SK-N-SH (cell line): ENCODE measurements at regions of chr7 and their contacts with region 1.

Region 1: DNA sequence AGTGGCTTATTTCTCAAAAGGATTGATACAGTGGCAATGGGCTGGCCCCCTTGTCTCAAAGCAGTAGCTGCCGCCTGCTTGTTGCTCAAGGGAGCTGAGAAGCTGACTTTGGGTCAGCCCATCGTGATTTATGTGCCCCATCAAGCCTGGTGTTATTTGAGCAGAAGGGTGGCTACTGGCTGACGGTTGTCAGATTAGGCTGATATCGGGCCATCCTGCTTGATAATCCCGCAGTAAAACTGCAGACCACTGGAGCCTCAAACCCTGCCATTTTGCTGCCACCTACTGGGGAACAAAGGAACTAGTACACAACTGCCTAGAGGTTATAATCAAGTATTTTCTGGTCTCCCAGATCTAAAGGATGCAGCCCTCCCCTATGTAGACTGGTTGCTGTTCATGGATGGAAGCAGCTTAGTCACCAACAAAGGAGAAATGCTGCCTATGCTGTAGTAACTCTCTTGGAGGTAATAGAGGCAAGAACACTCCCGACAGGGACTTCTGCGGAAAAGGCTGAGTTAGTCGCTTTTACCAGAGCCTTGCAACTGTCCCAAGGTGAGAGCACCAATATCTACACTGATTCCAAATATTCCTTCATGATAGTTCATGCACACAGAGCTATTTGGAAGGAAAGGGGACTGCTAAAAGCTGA is 65.9 kb upstream of the ZNF92 start:
- DNase-seq: peak; percentile 77
- H3K4me3 ChIP-seq: peak overlapping the region in 1 of 2 experiments; percentile 16; a peak in 2 of 4 replicates
- H3K27ac ChIP-seq: no peak overlapping the region
- H3K4me1 ChIP-seq: peaks cover 0 to 14% of the 10 kb centered on the region in 2 experiments; a peak in 2 of 4 replicates
- H3K27me3 ChIP-seq: no peaks in the 10 kb centered on the region
- CTCF ChIP-seq: peak; percentile 97
- EP300 ChIP-seq: no peak
- RAD21 ChIP-seq: peak; percentile 100

Region 2: GRCh38 chr7:64902806-64903721 is 404.7 kb before region 1 on chr7 and contains the start of gene ZNF273:
- CTCF ChIA-PET with region 1: no interaction called
- POLR2A ChIA-PET with region 1: no interaction called
- DNase-seq: peak; percentile 90
- H3K4me3 ChIP-seq: peak within 1 kb of the TSS; percentile 79 to 92
- H3K27ac ChIP-seq: peak within 1 kb of the TSS; percentile 70 to 75
- H3K4me1 ChIP-seq: peaks cover 0 to 17% of the 10 kb centered on the region in 2 experiments; a peak in 3 of 4 replicates
- H3K27me3 ChIP-seq: no peaks in the 10 kb centered on the region
- CTCF ChIP-seq: no peak
- EP300 ChIP-seq: no peak
- RAD21 ChIP-seq: no peak
- polyA plus RNA-seq, gene ZNF273: 2.3 and 3.0 TPM in 2 replicates

Region 3: GRCh38 chr7:65216459-65216858 is 91.3 kb before region 1 on chr7:
- CTCF ChIA-PET with region 1: interaction called, 181 read pairs
- POLR2A ChIA-PET with region 1: no interaction called
- DNase-seq: peak; percentile 20
- H3K4me3 ChIP-seq: no peak overlapping the region
- H3K27ac ChIP-seq: no peak overlapping the region
- H3K4me1 ChIP-seq: no peaks in the 10 kb centered on the region
- H3K27me3 ChIP-seq: no peaks in the 10 kb centered on the region
- CTCF ChIP-seq: peak; percentile 80
- EP300 ChIP-seq: no peak
- RAD21 ChIP-seq: peak; percentile 90

Region 4: DNA sequence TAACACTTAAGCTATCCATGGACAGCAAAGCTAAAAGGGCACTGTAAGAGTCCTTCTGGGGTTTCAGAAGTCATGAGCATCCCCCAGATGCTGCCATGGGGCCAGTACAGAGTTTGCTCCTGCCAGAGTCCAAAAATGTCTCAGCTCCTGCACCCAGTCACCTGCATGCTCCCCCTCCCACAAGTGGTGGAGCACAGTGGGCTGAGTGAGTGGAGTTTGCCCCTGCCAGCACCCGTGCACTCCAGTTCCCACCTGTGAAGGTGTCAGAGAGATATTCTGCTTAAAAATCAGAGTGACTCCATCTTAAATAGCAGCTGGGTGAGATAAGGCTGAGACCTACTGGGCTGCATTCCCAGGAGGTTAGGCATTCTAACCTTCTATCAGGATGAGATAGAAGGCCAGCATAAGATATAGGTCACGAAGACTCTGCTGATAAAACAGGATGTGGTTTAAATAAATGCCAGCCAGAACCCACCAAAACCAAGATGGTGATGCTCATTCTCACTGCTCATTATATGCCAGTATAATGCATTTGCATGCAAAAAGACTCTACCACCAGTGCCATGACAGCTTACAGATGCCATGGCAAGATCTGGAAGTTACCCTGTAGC is 74.3 kb before region 1 on chr7:
- CTCF ChIA-PET with region 1: interaction called, 32 read pairs
- POLR2A ChIA-PET with region 1: no interaction called
- DNase-seq: no peak
- H3K4me3 ChIP-seq: no peak overlapping the region
- H3K27ac ChIP-seq: no peak overlapping the region
- H3K4me1 ChIP-seq: peaks cover 0 to 14% of the 10 kb centered on the region in 2 experiments; a peak in 2 of 4 replicates
- H3K27me3 ChIP-seq: no peaks in the 10 kb centered on the region
- CTCF ChIP-seq: no peak
- EP300 ChIP-seq: no peak
- RAD21 ChIP-seq: no peak

Region 5: DNA sequence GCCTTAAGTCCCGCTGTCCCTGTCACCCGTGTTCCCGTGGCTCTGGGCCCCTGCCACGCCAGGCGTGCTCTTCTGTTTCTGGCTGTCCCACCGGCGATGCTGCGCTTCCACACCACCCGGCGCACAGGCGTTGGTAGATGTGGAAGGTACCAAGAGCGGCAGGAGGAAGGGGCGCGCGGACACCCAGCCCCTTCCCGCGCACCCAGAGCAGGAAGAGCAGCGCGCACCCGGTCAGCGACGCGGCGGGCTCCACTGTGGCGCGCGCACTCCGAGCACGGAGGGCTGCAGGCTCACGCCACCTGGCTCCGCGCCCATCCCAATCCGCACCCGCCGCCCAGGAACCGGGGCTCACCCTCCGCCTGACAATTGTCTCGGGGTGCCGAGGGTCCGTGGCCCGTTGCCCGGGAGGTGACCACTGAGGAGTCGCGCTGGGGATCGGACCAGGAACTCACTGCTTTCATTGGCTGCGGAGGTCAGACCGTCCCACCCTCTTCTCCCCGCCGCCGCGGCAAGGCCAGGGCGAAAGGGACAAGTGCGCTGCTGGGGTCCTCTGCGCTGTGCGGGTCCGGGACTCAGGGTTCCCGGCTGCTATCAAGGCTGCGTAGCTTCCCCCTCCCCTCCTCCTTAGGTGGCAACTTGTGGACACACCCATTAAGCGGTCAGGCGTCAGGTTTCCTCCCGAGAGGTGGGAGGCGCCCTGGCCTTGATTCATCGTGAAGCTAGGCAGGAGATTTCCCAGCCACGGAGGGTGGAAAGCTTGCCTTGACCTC is 55.7 kb before region 1 on chr7:
- CTCF ChIA-PET with region 1: interaction called, 39 read pairs
- POLR2A ChIA-PET with region 1: no interaction called
- DNase-seq: peak; percentile 98
- H3K4me3 ChIP-seq: peak overlapping the region; percentile 71 to 80
- H3K27ac ChIP-seq: peak overlapping the region in 1 of 2 experiments; percentile 88; a peak in 2 of 4 replicates
- H3K4me1 ChIP-seq: peaks cover 0 to 13% of the 10 kb centered on the region in 2 experiments; a peak in 1 of 4 replicates
- H3K27me3 ChIP-seq: no peaks in the 10 kb centered on the region; the same call in 1 of the 2 replicates
- CTCF ChIP-seq: no peak
- EP300 ChIP-seq: no peak
- RAD21 ChIP-seq: 0 out of 2 replicates have a peak, but pooled peaks have one; percentile 6

Region 6: GRCh38 chr7:65287023-65287422 is 20.8 kb before region 1 on chr7:
- CTCF ChIA-PET with region 1: interaction called, 15 read pairs
- POLR2A ChIA-PET with region 1: no interaction called
- DNase-seq: no peak
- H3K4me3 ChIP-seq: no peak overlapping the region
- H3K27ac ChIP-seq: no peak overlapping the region
- H3K4me1 ChIP-seq: no peaks in the 10 kb centered on the region
- H3K27me3 ChIP-seq: no peaks in the 10 kb centered on the region
- CTCF ChIP-seq: no peak
- EP300 ChIP-seq: no peak
- RAD21 ChIP-seq: no peak

Region 7: GRCh38 chr7:65342723-65343629 is 35.2 kb after region 1 on chr7:
- CTCF ChIA-PET with region 1: no interaction called
- POLR2A ChIA-PET with region 1: no interaction called
- DNase-seq: no peak
- H3K4me3 ChIP-seq: no peak overlapping the region
- H3K27ac ChIP-seq: no peak overlapping the region
- H3K4me1 ChIP-seq: no peaks in the 10 kb centered on the region
- H3K27me3 ChIP-seq: no peaks in the 10 kb centered on the region
- CTCF ChIP-seq: no peak
- EP300 ChIP-seq: no peak
- RAD21 ChIP-seq: no peak